PC-3 (cell line): ENCODE measurements at regions of chr17 and their contacts with region 1.

Region 1: DNA sequence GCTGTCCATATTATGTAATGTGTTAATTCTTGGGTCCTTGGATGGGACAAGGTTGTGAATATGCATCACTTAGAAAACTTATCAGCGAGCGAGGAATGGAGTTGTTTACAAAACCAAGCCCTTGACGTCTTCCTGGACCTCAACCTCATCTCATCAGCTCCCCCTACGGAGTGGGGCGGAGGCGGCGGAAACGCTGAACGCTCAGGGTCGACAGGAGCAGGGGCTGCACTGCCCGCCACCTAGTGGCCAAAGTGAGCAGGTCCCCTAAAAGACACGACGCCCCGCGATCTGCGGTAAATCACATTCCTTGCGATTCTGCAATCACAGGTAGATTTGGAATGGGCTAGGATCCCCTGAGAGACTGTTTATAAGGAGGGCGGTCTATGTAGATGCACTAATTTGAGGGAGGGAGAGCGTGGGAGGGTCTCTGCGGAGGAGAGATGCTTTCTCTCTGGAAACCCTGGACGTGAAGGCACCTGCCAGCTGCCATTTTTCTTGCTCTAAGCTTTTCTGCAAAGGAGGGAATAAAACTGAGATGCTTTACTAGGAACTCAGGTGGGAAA is 5.4 kb upstream of the ICAM2 start:
- DNase-seq: peak; percentile 89
- ATAC-seq: peak; percentile 87
- H3K4me3 ChIP-seq: peak overlapping the region; percentile 70
- H3K27ac ChIP-seq: no peak overlapping the region
- H3K4me1 ChIP-seq: peaks cover 4% of the 10 kb centered on the region; the same call in 1 of the 2 replicates
- H3K27me3 ChIP-seq: no peaks in the 10 kb centered on the region
- CTCF ChIP-seq: peak; percentile 99

Region 2: DNA sequence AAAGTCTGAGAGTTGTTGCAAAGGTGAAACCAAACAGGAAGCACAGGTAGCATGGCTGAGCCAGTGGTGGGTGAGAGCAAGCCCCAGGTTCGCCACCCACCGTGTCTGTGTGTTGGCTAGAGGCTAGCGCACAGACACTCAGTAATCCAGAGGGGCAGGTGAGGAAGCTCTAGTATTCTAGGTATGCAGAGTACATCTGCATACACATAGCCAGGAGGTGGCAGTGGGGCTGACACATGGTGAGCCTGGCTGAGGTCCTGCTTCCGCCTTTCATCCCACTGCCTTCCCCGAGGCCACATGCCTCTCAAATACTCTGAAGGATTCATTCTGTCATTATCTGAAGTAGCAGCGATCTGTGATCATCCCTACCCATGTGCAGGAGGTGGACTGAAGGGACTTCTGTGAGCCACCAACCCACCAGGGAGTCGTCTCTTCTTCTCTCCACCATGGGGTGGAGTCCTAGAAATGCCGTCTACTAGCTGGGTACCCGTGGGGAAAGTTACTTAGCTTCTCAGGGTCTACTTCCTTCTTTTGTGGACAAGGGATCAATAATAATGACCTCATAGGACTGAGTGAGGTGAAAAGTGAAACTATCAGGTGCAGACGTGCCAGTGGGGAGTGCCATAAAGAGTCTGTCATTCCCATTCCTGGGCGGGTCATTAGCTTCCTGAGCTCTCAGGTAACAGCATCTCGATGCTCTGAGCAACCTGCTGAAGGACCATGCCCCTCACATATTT is 30.6 kb after region 1 on chr17:
- CTCF ChIA-PET with region 1: interaction called, 11 read pairs
- POLR2A ChIA-PET with region 1: no interaction called
- intact Hi-C with region 1: no loop called
- DNase-seq: peak; percentile 49
- ATAC-seq: peak; percentile 9; the same call in 1 of the 2 replicates
- H3K4me3 ChIP-seq: no peak overlapping the region
- H3K27ac ChIP-seq: no peak overlapping the region; the same call in 1 of the 2 replicates
- H3K4me1 ChIP-seq: peaks cover 40% of the 10 kb centered on the region
- H3K27me3 ChIP-seq: no peaks in the 10 kb centered on the region
- CTCF ChIP-seq: 0 out of 2 replicates have a peak, but pooled peaks have one; percentile 23

Region 3: DNA sequence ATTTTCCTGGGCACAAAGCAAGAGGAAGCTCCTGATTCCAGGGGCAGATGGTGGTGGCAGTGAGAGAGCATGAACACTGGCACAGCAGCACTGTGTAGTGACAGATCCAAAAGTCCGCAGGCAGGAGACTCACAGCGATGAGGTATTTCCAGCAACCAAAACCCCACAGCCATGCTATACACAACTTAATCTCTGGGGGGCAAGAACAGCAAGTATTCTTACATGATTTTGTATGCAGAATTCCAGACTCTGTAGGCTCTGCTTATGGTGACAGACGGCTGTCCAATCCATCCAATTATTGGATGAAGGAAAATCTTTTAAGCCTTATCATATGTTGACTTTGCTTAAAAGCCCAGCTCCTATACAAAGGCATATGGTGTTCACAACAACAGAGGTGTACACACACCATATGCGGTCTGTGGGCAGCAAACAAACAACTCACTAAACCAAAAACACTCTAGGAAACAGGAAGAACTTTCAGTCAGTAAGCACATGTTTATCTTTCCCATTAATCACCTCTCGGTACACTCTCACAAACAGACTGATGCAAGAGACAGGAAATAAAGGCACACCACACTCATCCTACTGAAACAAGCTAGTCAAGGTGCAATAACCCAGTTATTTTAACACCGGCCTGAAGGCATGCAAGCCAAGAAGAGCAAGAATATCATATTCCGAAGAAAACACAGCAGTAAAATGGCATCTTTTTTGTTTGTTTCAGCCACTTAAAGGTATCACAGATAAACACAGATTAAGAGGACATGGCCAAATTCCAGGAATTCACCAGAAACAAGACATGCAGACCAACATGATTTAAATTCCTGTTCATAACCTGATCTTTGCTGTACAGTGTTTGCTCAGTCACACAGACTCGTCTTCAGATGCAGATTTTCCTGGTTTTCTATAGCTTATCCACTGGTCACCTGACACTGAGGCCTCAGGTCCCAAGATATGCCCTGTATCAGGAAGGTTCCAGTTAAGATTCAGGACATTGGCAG is 56.3 kb after region 1 on chr17:
- CTCF ChIA-PET with region 1: interaction called, 3 read pairs
- POLR2A ChIA-PET with region 1: interaction called, 3 read pairs
- intact Hi-C with region 1: loop called (anchors 5 kb)
- DNase-seq: peak; percentile 98
- ATAC-seq: peak; percentile 82
- H3K4me3 ChIP-seq: peak overlapping the region; percentile 44
- H3K27ac ChIP-seq: peak overlapping the region; percentile 95
- H3K4me1 ChIP-seq: peaks cover 62% of the 10 kb centered on the region
- H3K27me3 ChIP-seq: no peaks in the 10 kb centered on the region
- CTCF ChIP-seq: peak; percentile 41

Region 4: DNA sequence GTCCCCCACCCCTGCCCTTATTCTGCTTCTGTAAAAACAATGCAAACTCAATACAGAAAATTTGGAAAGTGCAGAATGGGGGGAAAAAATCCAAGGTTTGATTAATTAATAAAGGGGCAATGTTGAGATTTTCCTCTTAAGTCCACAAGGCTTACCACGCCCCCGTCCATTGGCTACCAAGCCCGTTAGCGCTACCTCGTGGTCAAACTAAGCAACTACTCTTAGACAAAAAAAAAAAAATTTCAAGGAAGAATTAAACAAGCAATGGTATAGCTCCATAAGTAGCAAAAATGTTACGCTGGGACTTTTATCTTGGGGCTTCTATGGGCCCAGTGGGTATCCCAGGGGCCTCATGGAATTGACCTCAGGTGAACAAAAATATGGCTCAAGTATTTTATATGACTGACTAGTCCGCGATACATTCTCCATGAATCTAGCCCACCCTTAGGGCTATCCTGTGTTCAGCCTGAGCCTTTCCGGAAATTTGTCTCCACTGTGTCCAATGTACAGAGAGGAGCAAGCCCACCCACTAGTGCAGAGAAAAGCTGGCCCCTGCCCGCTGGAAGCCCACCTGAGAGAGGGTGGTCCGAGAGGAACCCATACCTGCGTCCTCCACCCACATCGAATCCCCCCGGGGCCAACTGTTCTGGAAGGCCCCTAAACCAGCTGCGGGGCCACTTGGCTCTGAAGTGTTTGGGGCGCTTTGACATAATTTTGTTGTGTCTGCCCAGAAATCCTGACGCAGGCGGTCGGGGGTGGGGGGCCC is 256.3 kb after region 1 on chr17:
- CTCF ChIA-PET with region 1: interaction called, 4 read pairs
- POLR2A ChIA-PET with region 1: no interaction called
- intact Hi-C with region 1: loop called (anchors 1 kb)
- DNase-seq: peak; percentile 85
- ATAC-seq: peak; percentile 38
- H3K4me3 ChIP-seq: peak overlapping the region; percentile 2; the same call in 1 of the 2 replicates
- H3K27ac ChIP-seq: no peak overlapping the region
- H3K4me1 ChIP-seq: peaks cover 14% of the 10 kb centered on the region
- H3K27me3 ChIP-seq: no peaks in the 10 kb centered on the region
- CTCF ChIP-seq: peak; percentile 95